PC-9 (cell line): ENCODE measurements at regions of chr16 and their contacts with region 1.

Region 1: DNA sequence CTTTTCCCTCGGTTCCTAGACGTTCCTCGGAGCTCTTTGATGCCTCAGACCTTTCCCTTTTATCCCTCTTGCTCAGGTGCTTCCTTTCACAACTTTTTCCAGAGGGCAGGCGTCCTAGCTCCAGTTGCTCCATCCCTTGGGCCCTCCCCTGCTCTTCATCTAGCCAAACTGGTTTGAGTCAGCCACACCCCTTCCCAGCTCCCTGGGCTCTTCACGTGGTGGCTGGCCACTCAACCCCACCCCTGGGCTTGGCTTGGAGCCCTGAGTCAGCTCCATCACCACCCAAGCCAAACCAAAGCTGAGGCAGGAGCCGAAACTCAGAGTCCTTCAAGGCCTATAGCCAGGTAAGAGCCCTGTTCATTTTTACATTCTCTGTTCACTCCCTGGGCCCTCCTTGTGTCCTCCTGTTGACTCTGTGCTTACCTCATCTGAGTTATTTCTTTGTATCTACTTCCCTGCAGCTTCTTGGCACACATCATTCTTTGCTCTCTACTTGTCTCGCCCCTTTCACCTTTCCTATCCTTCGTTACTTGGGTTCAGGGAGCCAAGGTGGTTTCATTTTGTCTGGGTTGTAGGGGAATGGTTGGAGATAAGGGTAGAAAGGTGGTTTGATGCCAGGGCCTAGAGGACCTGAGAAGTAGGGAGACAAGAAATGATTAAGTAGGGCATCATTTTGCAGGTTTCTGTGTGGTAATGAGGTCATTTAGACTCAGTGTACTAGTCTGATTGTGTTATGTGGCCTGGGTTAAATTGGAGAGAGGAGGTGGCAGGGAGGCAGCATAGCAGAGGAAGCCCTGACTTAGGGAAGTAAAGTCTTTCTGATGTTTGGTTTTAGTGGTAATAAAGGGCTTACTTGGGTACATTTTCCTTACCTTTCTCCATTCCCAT is 7.6 kb upstream of the PHKG2 start:
- DNase-seq: peak; percentile 98
- H3K4me3 ChIP-seq: peak overlapping the region; percentile 68
- H3K27ac ChIP-seq: peak overlapping the region; percentile 96
- H3K4me1 ChIP-seq: peaks cover 33% of the 10 kb centered on the region
- H3K27me3 ChIP-seq: no peaks in the 10 kb centered on the region
- CTCF ChIP-seq: 0 out of 2 replicates have a peak, but pooled peaks have one; percentile 17

Region 2: DNA sequence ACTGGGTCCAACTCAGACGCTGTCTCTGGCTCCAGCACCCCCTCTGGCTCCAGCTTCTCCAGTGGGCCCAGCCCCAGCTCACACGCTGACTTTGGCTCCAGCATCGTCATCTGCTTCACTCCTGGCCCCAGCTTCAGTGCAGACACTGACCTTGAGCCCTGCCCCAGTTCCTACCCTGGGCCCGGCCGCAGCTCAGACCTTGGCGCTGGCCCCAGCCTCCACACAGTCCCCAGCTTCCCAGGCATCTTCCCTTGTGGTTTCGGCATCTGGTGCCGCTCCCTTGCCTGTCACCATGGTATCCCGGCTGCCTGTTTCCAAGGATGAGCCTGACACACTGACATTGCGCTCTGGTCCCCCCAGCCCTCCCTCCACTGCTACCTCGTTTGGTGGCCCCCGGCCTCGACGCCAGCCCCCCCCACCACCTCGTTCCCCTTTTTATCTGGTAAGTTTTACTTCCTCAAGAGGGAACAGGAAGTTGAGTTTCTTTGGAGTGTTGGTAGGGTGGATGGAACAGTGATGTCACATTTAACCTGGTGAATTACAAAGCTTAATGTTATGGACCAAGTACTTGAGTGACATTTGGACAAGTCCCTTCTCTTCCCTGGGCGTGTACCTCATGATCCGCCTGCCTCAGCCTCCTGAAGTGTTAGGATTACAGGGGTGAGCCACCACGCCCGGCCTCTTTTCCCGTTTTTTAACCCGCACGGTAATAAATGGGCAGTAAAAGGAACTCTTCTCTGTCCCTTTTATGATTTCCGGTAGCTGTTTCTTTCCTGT is 15.8 kb before region 1 on chr16:
- CTCF ChIA-PET with region 1: no interaction called
- POLR2A ChIA-PET with region 1: no interaction called
- intact Hi-C with region 1: no loop called
- DNase-seq: no peak
- H3K4me3 ChIP-seq: no peak overlapping the region
- H3K27ac ChIP-seq: no peak overlapping the region
- H3K4me1 ChIP-seq: 0 out of 2 replicates have a peak, but pooled peaks cover 5% of the 10 kb centered on the region
- H3K27me3 ChIP-seq: no peaks in the 10 kb centered on the region
- CTCF ChIP-seq: no peak

Region 3: GRCh38 chr16:30761928-30762810 is 21.6 kb after region 1 on chr16 and contains the starts of genes CFAP119 and RNF40:
- CTCF ChIA-PET with region 1: no interaction called
- POLR2A ChIA-PET with region 1: no interaction called
- intact Hi-C with region 1: loop called (anchors 1 kb)
- DNase-seq: peak; percentile 96 to 99
- H3K4me3 ChIP-seq: peak within 1 kb of the TSS; percentile 83
- H3K27ac ChIP-seq: peak within 1 kb of the TSS; percentile 2; the same call in 1 of the 2 replicates
- H3K4me1 ChIP-seq: peaks cover 24% of the 10 kb centered on the region
- H3K27me3 ChIP-seq: no peaks in the 10 kb centered on the region
- CTCF ChIP-seq: no peak
- total RNA-seq, gene CFAP119: 17.9 and 19.9 TPM in 2 replicates
- total RNA-seq, gene RNF40: 149 and 178 TPM in 2 replicates

Region 4: GRCh38 chr16:30805370-30806169 is 65.0 kb after region 1 on chr16:
- CTCF ChIA-PET with region 1: no interaction called
- POLR2A ChIA-PET with region 1: interaction called, 11 read pairs
- intact Hi-C with region 1: loop called (anchors 2 kb)
- DNase-seq: peak; percentile 61 to 87
- H3K4me3 ChIP-seq: peak overlapping the region; percentile 78
- H3K27ac ChIP-seq: peak overlapping the region; percentile 60
- H3K4me1 ChIP-seq: peaks cover 12% of the 10 kb centered on the region
- H3K27me3 ChIP-seq: no peaks in the 10 kb centered on the region
- CTCF ChIP-seq: no peak; the same call in 1 of the 2 replicates

Region 5: GRCh38 chr16:30948667-30949649 is 208.3 kb after region 1 on chr16 and contains the start of gene ORAI3:
- CTCF ChIA-PET with region 1: no interaction called
- POLR2A ChIA-PET with region 1: interaction called, 23 read pairs
- intact Hi-C with region 1: no loop called
- DNase-seq: peak; percentile 53 to 73
- H3K4me3 ChIP-seq: peak within 1 kb of the TSS; percentile 90
- H3K27ac ChIP-seq: no peak within 1 kb of the TSS
- H3K4me1 ChIP-seq: peaks cover 15% of the 10 kb centered on the region
- H3K27me3 ChIP-seq: no peaks in the 10 kb centered on the region
- CTCF ChIP-seq: no peak
- total RNA-seq, gene ORAI3: 40.7 and 43.5 TPM in 2 replicates

Region 6: GRCh38 chr16:31641279-31641678 is 900.7 kb after region 1 on chr16:
- CTCF ChIA-PET with region 1: no interaction called
- POLR2A ChIA-PET with region 1: no interaction called
- intact Hi-C with region 1: no loop called
- DNase-seq: no peak
- H3K4me3 ChIP-seq: no peak overlapping the region
- H3K27ac ChIP-seq: no peak overlapping the region
- H3K4me1 ChIP-seq: no peaks in the 10 kb centered on the region
- H3K27me3 ChIP-seq: peaks cover 61% of the 10 kb centered on the region
- CTCF ChIP-seq: no peak